CD8-positive, alpha-beta T cell (primary cell): ENCODE measurements at regions of chr17 and their contacts with region 1.

Region 1: GRCh38 chr17:8057691-8058114 is 18.8 kb downstream of the ALOX15B start:
- DNase-seq: peak in 7 of 9 experiments; percentile 15 to 83 (median 51)
- ATAC-seq: peak; percentile 93
- H3K4me3 ChIP-seq: no peak overlapping the region
- H3K4me3 Mint-ChIP-seq: no peak overlapping the region
- H3K27ac ChIP-seq: no peak overlapping the region
- H3K27ac Mint-ChIP-seq: no peak overlapping the region
- H3K4me1 ChIP-seq: no peaks in the 10 kb centered on the region
- H3K4me1 Mint-ChIP-seq: peaks cover 12% of the 10 kb centered on the region
- H3K27me3 ChIP-seq: peaks cover 0 to 8% of the 10 kb centered on the region in 2 experiments
- H3K27me3 Mint-ChIP-seq: peaks cover 57% of the 10 kb centered on the region
- CTCF ChIP-seq: peak; percentile 69

Region 2: DNA sequence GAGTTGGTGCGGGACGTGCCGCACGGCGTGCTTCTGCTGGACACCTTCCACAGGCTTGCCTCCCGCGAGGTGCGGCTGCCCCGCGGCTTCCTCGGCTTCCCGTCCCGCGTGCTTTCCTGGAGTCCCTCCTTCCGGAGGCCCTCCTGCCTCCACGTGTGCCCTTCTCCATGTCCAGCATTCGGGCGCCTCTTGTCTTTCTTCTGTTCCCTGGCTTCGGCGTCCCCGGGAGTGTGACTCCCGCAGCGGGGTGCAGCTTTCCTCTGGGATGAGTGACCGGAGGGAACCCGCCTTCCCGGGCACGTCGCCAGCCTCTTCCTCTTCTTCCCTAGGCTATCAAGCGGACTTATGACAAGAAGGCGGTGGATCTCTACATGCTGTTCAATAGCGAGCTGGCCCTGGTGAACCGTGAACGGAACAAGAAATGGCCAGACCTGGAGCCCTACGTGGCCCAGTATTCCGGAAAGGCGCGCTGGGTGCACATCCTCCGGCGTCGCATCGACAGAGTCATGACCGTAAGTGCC is 317.2 kb before region 1 on chr17:
- CTCF ChIA-PET with region 1: interaction called, 11 read pairs
- POLR2A ChIA-PET with region 1: no interaction called
- intact Hi-C with region 1: loop called (anchors 1 to 2 kb)
- DNase-seq: no peak
- ATAC-seq: no peak
- H3K4me3 ChIP-seq: no peak overlapping the region
- H3K4me3 Mint-ChIP-seq: no peak overlapping the region
- H3K27ac ChIP-seq: no peak overlapping the region
- H3K27ac Mint-ChIP-seq: no peak overlapping the region
- H3K4me1 ChIP-seq: no peaks in the 10 kb centered on the region
- H3K4me1 Mint-ChIP-seq: no peaks in the 10 kb centered on the region
- H3K27me3 ChIP-seq: peaks cover 0 to 6% of the 10 kb centered on the region in 2 experiments
- H3K27me3 Mint-ChIP-seq: peaks cover 28% of the 10 kb centered on the region
- CTCF ChIP-seq: no peak

Region 3: DNA sequence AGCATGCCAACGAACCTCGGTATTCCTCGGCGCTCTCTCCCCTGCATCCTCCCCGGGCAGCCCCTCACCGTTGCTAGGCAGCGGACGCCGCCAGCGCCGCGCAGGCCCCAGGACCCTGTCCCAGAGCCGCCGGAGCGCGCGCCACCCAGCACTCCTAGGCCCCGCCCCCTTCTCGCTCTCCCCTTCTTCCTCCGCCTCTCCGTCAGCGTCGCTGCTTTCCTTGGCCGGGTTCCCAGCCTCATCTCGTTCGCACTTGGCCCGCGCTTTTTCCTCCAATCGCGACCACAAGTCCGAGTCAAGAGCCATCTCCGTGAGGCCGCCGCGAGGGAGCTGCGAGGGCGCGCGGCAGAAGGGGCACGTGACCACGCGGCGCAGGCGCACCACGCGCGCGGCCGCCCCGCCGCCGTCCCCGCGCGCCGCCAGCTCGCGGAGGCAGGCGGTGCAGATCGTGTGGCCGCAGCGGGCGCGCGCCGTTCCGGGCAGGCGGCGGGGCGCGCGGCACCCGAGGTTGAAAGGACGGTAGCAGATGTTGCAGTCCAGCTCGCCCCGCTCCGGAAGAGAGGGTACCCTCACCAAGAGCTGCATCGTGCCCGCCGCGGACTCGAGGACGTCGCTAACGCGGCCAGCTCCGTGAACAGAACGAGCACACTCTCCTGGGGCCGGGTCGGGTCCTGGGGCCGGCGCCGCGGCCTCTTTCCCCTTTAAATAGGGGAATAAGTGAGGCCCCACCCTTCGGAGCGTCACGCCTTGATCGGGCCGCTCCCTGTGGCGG is 141.9 kb before region 1 on chr17 and contains the start of gene RNF227:
- CTCF ChIA-PET with region 1: interaction called, 15 read pairs
- POLR2A ChIA-PET with region 1: no interaction called
- intact Hi-C with region 1: loop called (anchors 1 kb)
- DNase-seq: peak; percentile 52 to 93 (median 80)
- ATAC-seq: peak; percentile 82
- H3K4me3 ChIP-seq: peak within 1 kb of the TSS; percentile 74 to 79
- H3K4me3 Mint-ChIP-seq: peak within 1 kb of the TSS; percentile 89
- H3K27ac ChIP-seq: peak within 1 kb of the TSS; percentile 67 to 80
- H3K27ac Mint-ChIP-seq: peak within 1 kb of the TSS; percentile 90
- H3K4me1 ChIP-seq: peaks cover 25% of the 10 kb centered on the region
- H3K4me1 Mint-ChIP-seq: peaks cover 28% of the 10 kb centered on the region
- H3K27me3 ChIP-seq: no peaks in the 10 kb centered on the region
- H3K27me3 Mint-ChIP-seq: no peaks in the 10 kb centered on the region
- CTCF ChIP-seq: no peak
- total RNA-seq, gene RNF227: 2.8 to 3.3 TPM

Region 4: GRCh38 chr17:8016632-8017478 is 40.8 kb before region 1 on chr17:
- CTCF ChIA-PET with region 1: interaction called, 4 read pairs
- POLR2A ChIA-PET with region 1: no interaction called
- intact Hi-C with region 1: loop called (anchors 2 kb)
- DNase-seq: peak in 7 of 9 experiments; percentile 15 to 57 (median 36)
- ATAC-seq: peak; percentile 89
- H3K4me3 ChIP-seq: peak overlapping the region; percentile 39 to 55
- H3K4me3 Mint-ChIP-seq: peak overlapping the region; percentile 81
- H3K27ac ChIP-seq: no peak overlapping the region
- H3K27ac Mint-ChIP-seq: no peak overlapping the region
- H3K4me1 ChIP-seq: peaks cover 8% of the 10 kb centered on the region
- H3K4me1 Mint-ChIP-seq: peaks cover 12% of the 10 kb centered on the region
- H3K27me3 ChIP-seq: peaks cover 0 to 15% of the 10 kb centered on the region in 2 experiments
- H3K27me3 Mint-ChIP-seq: peaks cover 13% of the 10 kb centered on the region
- CTCF ChIP-seq: peak; percentile 63

Region 5: DNA sequence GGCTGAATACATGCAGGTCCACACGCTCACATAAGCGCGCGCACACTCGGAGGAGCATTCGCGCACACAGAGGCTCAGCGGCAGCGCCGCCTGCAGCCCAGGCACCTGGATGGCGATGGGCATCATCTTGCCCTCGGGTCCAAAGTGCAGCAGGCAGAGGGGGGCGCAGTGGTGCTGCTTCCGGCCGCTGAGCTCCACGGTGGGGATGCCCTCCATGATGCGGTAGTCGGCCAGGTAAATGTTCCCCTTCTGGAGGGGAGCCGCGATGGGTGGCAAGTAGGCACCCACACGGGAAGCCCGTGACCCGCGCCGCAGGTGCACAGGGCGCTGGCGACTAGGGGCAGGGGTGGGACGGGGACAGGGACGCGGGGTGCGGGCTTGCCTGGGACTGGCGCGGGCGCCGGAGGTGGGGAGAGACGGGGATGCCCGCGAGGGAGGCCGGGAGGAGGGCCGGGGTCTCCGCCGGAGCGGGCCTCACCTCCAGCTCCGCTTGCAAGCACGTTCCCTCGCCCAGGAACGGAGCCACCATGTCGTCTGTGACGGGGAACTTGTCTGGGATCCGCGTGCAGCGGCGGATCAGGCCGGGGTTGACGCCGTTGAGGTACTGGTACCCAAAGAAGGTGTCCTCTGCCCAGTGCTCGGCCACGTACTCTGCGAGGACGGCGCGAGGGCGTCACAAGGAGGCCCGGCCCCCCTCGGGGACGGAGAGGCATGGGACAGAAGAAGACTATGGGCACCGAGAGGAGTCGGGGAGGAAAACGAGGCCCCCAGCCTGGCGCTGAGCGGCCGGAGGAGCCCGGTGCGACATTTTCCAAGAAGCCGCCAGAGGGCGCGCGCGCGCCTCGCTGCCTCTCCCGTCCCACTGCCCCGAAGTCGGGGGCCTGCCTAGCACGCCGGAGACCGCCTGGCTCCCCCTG is 21.8 kb after region 1 on chr17:
- CTCF ChIA-PET with region 1: interaction called, 124 read pairs
- POLR2A ChIA-PET with region 1: interaction called, 6 read pairs
- intact Hi-C with region 1: loop called (anchors 1 kb)
- DNase-seq: peak; percentile 64 to 93 (median 82)
- ATAC-seq: peak; percentile 83
- H3K4me3 ChIP-seq: peak overlapping the region; percentile 64 to 80
- H3K4me3 Mint-ChIP-seq: peak overlapping the region; percentile 90
- H3K27ac ChIP-seq: peak overlapping the region; percentile 57 to 71
- H3K27ac Mint-ChIP-seq: peak overlapping the region; percentile 91
- H3K4me1 ChIP-seq: peaks cover 7% of the 10 kb centered on the region
- H3K4me1 Mint-ChIP-seq: peaks cover 18% of the 10 kb centered on the region
- H3K27me3 ChIP-seq: peaks cover 2% of the 10 kb centered on the region in 2 experiments
- H3K27me3 Mint-ChIP-seq: peaks cover 6% of the 10 kb centered on the region
- CTCF ChIP-seq: peak; percentile 89

Region 6: DNA sequence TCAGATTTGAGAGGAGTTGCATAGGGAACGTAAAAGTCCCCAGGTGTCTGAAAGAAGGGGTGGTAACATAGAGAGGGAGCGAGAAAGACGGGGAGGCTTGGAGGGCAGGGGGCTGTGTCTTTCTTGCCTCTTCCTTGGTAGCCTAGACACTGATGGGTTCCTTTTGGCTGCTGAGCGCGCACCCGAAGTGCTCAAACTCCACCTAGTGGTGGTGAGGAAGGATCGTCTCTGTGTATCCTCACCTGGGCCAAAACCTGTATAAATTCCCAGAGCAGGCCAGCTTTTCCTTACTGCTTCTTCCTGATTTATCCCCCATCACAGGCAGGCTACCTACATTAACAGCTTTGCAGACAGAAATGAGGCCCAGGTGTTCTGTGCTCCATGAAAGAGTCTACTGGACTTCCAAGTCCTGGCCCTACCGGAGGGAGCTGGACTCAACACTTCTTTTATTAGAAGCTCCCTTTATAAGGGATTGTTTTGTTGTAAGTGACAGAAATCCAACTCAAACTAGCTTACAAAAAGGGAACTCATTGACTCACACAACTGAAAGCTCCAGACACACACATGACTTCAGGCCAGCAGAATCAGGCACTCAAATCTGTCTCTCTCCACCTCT is 243.0 kb after region 1 on chr17:
- CTCF ChIA-PET with region 1: interaction called, 18 read pairs
- POLR2A ChIA-PET with region 1: no interaction called
- intact Hi-C with region 1: loop called (anchors 1 kb)
- DNase-seq: peak; percentile 29 to 86 (median 63)
- ATAC-seq: peak; percentile 93
- H3K4me3 ChIP-seq: no peak overlapping the region
- H3K4me3 Mint-ChIP-seq: no peak overlapping the region
- H3K27ac ChIP-seq: no peak overlapping the region
- H3K27ac Mint-ChIP-seq: peak overlapping the region; percentile 55
- H3K4me1 ChIP-seq: peaks cover 4% of the 10 kb centered on the region
- H3K4me1 Mint-ChIP-seq: peaks cover 9% of the 10 kb centered on the region
- H3K27me3 ChIP-seq: no peaks in the 10 kb centered on the region
- H3K27me3 Mint-ChIP-seq: no peaks in the 10 kb centered on the region
- CTCF ChIP-seq: peak; percentile 76

Region 7: DNA sequence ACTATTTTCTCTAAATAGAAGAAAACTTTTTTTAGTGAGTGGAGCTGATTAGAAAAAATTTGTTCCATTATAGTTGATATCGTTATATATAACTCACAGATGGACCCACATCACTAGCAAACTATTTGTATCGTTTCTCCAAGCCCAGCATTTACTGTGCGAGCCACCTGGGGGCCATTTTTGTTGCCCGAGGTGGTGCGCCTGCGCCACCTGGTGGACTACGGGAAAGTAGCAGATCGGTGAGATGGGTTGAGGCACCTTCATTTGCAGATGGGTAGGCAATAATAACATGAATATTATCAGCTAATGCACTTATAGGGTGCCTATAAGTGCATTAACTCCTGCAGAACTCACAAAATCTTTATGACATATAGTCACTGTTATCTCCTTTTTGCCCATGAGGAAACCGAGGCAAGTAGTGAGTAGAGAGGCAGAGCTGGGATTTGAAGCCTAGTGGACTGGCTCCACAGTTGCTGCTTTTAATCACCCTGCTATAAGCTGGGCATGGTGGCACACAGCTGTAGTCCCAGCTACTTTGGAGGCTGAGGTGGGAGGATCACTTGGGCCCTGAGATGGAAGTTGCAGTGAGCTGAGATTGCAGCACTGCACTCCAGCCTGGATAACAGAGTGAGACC is 940.4 kb after region 1 on chr17:
- CTCF ChIA-PET with region 1: interaction called, 4 read pairs
- POLR2A ChIA-PET with region 1: no interaction called
- intact Hi-C with region 1: loop called (anchors 5 kb)
- DNase-seq: peak; percentile 61 to 90 (median 80)
- ATAC-seq: peak; percentile 85
- H3K4me3 ChIP-seq: no peak overlapping the region
- H3K4me3 Mint-ChIP-seq: no peak overlapping the region
- H3K27ac ChIP-seq: no peak overlapping the region
- H3K27ac Mint-ChIP-seq: no peak overlapping the region
- H3K4me1 ChIP-seq: peaks cover 5% of the 10 kb centered on the region
- H3K4me1 Mint-ChIP-seq: peaks cover 12% of the 10 kb centered on the region
- H3K27me3 ChIP-seq: peaks cover 7 to 14% of the 10 kb centered on the region in 2 experiments
- H3K27me3 Mint-ChIP-seq: peaks cover 32% of the 10 kb centered on the region
- CTCF ChIP-seq: peak; percentile 99